ENCODE measurements at regions of chr2 and their contacts with region 1.

Region 1: DNA sequence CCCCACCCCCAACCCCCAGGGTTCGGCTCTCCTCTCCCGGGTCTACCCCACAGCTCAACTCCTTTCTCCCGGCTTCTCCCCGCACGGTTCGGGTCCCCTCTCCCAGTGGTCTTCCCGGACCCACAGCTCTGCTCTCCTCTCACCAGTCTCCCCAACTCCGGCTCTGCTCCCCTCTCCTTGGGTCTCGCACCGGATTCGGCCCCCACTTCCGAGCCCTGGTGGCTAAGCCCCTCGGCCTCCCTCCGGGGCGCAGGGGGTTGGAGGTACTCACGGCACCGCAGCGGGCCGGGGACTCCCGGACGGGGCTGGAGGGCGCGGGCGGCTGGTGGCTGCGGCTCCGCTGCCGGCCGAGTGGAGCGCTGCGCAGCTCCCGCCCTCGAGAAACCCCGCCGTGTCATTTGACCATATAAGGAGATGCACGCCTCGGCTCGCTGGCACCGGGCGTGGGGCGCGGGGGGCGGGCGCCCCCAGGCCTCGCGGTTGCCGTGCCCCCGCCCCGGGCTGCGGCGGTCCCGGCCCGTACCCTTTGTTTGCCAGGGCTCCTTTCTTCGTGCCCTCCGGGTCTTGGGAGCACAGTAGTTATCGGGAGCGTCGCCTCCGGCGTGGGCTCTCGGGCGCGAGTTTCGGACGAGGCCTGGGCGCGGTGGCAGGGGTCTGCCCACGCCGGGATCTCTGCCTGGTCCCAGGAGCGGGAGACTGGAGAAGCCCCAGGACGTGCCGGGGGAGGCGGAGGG is at the start of gene FHL2:
- DNase-seq: peak in 1 of 2 donors; percentile 79
- H3K4me3 ChIP-seq: peak within 1 kb of the TSS; percentile 86 to 88
- H3K27ac ChIP-seq: peak within 1 kb of the TSS; percentile 70 to 76
- H3K4me1 ChIP-seq: peaks cover 0 to 2% of the 10 kb centered on the region in 2 donors
- H3K27me3 ChIP-seq: no peaks in the 10 kb centered on the region
- CTCF ChIP-seq: peak; percentile 44 to 55 (median 53)
- total RNA-seq, gene FHL2: 175 TPM

Region 2: GRCh38 chr2:105337124-105338019 is 61.5 kb before region 1 on chr2 and contains the start of gene C2orf49:
- intact Hi-C with region 1: loop called (anchors 2 kb)
- DNase-seq: peak in 1 of 2 donors; percentile 91
- H3K4me3 ChIP-seq: peak within 1 kb of the TSS; percentile 69 to 73
- H3K27ac ChIP-seq: peak within 1 kb of the TSS; percentile 94 to 96
- H3K4me1 ChIP-seq: peaks cover 0 to 13% of the 10 kb centered on the region in 2 donors
- H3K27me3 ChIP-seq: no peaks in the 10 kb centered on the region
- CTCF ChIP-seq: no peak
- total RNA-seq, gene C2orf49: 12.2 TPM

Region 3: GRCh38 chr2:105379741-105380186 is 19.1 kb before region 1 on chr2:
- intact Hi-C with region 1: no loop called
- DNase-seq: peak in 1 of 2 donors; percentile 49
- H3K4me3 ChIP-seq: no peak overlapping the region
- H3K27ac ChIP-seq: peak overlapping the region; percentile 57 to 86
- H3K4me1 ChIP-seq: peaks cover 0 to 26% of the 10 kb centered on the region in 2 donors
- H3K27me3 ChIP-seq: no peaks in the 10 kb centered on the region
- CTCF ChIP-seq: no peak

Region 4: DNA sequence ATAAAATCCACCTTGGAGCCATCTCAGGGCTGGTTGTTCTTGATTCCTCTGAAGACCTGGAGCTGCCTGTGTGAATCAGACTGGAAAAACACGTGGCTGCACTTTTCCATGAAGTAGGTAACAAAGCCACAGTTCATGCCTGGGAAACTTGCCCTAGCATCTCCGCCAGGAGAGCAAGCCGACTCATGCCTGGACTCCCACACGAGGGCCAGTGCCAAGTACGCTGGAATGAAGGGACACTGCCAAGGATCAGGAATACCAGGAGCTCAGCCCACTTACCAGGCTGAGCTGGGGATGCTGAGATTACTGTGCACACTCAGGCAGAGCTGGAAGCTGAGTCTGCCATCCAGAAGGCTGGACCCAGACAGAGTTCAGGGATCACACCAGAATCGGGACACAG is 10.9 kb after region 1 on chr2:
- intact Hi-C with region 1: loop called (anchors 1 kb)
- DNase-seq: peak; percentile 70 to 96
- H3K4me3 ChIP-seq: no peak overlapping the region
- H3K27ac ChIP-seq: peak overlapping the region; percentile 68 to 74
- H3K4me1 ChIP-seq: peaks cover 9 to 31% of the 10 kb centered on the region in 2 donors
- H3K27me3 ChIP-seq: no peaks in the 10 kb centered on the region
- CTCF ChIP-seq: no peak

Region 5: DNA sequence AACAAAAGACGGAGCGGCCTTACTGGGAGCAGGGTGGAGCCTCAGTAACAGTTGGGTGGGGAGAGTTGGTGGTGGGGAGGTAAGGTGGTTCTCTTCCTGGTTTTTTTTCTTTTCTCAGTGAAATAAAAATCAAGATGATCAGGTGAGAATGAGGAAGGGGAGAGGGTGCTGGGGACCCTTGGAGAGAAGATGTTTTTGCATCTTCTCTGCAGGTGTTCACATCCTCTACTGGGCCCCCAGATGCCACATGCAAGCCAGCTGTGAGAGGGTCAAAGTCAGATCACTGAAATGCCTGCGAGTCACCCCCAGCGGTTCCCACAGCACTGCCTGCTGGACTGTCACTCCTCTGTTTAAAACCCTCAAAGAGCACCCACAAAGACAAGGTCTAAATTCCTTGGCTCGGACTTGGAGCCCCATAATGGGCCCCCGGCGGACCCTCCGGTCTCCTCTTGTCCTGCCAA is 69.7 kb after region 1 on chr2:
- intact Hi-C with region 1: no loop called
- DNase-seq: no peak
- H3K4me3 ChIP-seq: no peak overlapping the region
- H3K27ac ChIP-seq: no peak overlapping the region
- H3K4me1 ChIP-seq: peaks cover 0 to 2% of the 10 kb centered on the region in 2 donors
- H3K27me3 ChIP-seq: no peaks in the 10 kb centered on the region
- CTCF ChIP-seq: no peak

Region 6: GRCh38 chr2:105604938-105605337 is 206.1 kb after region 1 on chr2:
- intact Hi-C with region 1: loop called (anchors 5 kb)
- DNase-seq: peak in 1 of 2 donors; percentile 90
- H3K4me3 ChIP-seq: peak overlapping the region in 1 of 2 donors; percentile 21
- H3K27ac ChIP-seq: peak overlapping the region; percentile 58 to 68
- H3K4me1 ChIP-seq: peaks cover 0 to 19% of the 10 kb centered on the region in 2 donors
- H3K27me3 ChIP-seq: no peaks in the 10 kb centered on the region
- CTCF ChIP-seq: no peak

Region 7: GRCh38 chr2:105789745-105790460 is 391.0 kb after region 1 on chr2:
- intact Hi-C with region 1: loop called (anchors 5 kb)
- DNase-seq: peak; percentile 47 to 89
- H3K4me3 ChIP-seq: peak overlapping the region in 1 of 2 donors; percentile 35
- H3K27ac ChIP-seq: peak overlapping the region; percentile 68 to 81
- H3K4me1 ChIP-seq: peaks cover 19 to 34% of the 10 kb centered on the region in 2 donors
- H3K27me3 ChIP-seq: no peaks in the 10 kb centered on the region
- CTCF ChIP-seq: peak in 1 of 3 experiments; percentile 9